Activated CD4-positive, alpha-beta T cell treated with anti-CD3 and anti-CD28 coated beads, Interleukin-2, amount 10 ng/mL, durations not matched to agents 7 days and 5 days (primary cell): ENCODE measurements at regions of chr7 and their contacts with region 1.

Region 1: GRCh38 chr7:4641667-4642467 is 40.2 kb upstream of the FOXK1 start:
- DNase-seq: peak; percentile 95
- H3K4me3 Mint-ChIP-seq: peak overlapping the region; percentile 91
- H3K27ac Mint-ChIP-seq: peak overlapping the region; percentile 96
- H3K4me1 Mint-ChIP-seq: peaks cover 20% of the 10 kb centered on the region
- H3K27me3 Mint-ChIP-seq: no peaks in the 10 kb centered on the region

Region 2: GRCh38 chr7:4621401-4622145 is 20.3 kb before region 1 on chr7:
- CTCF ChIA-PET with region 1: no interaction called
- POLR2A ChIA-PET with region 1: no interaction called
- DNase-seq: no peak
- H3K4me3 Mint-ChIP-seq: no peak overlapping the region
- H3K27ac Mint-ChIP-seq: no peak overlapping the region
- H3K4me1 Mint-ChIP-seq: peaks cover 27% of the 10 kb centered on the region
- H3K27me3 Mint-ChIP-seq: no peaks in the 10 kb centered on the region

Region 3: DNA sequence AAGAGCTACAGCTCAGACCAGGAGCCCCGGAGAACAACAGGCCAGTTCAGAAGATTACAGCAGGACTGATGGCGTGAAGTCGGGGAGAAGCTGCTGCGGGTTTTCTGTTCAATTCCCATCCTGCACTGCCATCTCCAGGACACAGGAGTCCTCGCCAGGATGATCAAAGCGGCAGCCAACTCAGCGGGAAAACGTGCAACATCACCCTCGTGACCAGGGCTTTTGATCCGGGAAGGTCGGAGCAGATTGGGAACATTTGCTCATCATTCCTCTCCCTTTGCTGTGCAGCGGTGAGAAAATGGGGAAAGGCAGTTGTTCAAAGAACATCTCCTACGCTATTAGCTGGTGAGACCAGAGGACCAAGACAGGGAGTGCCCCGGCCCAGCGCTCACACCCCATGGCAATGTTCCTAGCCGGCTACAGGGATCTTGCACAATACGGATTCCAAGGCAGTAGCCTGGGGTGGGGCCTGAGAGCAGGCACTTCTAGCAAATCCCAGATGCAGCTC is 10.1 kb before region 1 on chr7:
- CTCF ChIA-PET with region 1: interaction called, 10 read pairs
- POLR2A ChIA-PET with region 1: no interaction called
- DNase-seq: no peak
- H3K4me3 Mint-ChIP-seq: no peak overlapping the region
- H3K27ac Mint-ChIP-seq: no peak overlapping the region
- H3K4me1 Mint-ChIP-seq: no peaks in the 10 kb centered on the region
- H3K27me3 Mint-ChIP-seq: no peaks in the 10 kb centered on the region

Region 4: DNA sequence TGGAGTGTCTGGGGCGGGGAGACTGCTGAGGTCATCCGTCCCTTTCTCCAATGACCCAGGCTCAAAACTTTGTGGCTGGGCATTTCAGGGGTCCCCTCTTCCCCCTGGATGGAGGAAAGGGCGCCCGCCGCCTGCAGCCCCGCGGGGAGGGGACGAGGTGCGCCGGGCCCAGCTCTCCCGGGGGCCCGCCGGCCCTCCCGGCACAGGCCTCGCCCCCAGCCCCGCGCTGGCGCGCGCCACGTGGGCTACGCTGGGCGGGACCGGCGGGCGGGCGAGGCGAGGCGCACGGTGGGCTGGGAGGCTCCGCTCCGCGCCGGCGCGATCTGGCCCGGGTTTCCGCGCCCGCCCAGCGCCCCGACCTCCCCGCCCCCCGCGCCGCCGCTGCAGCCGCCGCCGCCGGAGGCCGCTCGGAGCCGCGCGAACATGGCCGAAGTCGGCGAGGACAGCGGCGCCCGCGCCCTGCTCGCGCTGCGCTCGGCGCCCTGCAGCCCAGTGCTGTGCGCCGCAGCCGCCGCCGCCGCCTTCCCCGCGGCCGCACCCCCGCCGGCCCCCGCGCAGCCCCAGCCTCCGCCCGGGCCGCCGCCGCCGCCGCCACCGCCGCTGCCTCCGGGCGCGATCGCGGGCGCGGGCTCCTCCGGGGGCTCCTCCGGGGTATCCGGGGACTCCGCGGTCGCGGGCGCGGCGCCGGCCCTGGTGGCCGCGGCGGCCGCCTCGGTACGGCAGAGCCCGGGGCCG is 40.2 kb after region 1 on chr7 and contains the start of gene FOXK1:
- CTCF ChIA-PET with region 1: interaction called, 15 read pairs
- POLR2A ChIA-PET with region 1: interaction called, 7 read pairs
- DNase-seq: peak; percentile 78
- H3K4me3 Mint-ChIP-seq: peak within 1 kb of the TSS; percentile 99
- H3K27ac Mint-ChIP-seq: peak within 1 kb of the TSS; percentile 100
- H3K4me1 Mint-ChIP-seq: peaks cover 28% of the 10 kb centered on the region
- H3K27me3 Mint-ChIP-seq: no peaks in the 10 kb centered on the region
- total RNA-seq, gene FOXK1: 32.0 to 36.2 TPM